Esophagus squamous epithelium (tissue), 5 donors: ENCODE measurements at regions of chr9 and their contacts with region 1.

Region 1: DNA sequence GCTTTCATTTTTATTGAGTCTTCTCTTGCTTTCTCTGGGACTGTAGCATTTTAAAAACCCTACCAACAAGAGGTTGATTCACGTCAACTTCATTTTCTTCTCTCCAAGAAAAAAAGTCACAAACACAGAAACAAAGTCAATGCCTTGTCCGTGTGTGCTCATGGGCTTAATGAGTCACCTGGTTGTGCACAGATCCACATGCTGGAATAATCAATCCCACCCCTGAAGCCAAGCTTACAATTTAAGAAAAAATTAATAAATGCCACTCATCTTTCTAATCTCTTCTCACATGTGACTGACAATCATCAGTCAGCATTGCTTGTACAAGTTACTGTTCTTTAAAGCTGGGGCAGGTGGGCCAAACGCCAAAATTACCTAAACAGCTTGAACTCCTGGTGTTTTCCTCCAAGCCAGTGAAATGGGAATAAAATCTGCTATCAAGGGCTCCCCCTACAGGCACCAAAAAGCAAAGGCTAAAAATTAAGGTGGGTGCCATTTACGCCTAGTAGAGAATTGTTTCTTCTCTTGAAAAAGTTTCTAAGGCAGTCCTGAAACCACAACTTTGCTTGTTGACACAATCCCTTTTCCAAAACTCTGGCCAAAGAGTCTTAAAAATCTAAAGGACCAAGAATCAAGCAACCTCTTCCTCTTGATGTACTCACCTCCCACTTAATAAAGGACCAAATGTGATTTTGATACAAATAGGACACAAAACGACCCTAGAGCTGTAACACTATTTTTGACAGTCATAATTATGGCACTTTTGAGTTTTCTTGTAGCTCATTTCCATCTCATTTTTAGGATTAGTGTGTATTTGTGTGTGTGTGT is 21.3 kb downstream of the TRMO start:
- DNase-seq: no peak
- H3K4me3 ChIP-seq: no peak overlapping the region
- H3K27ac ChIP-seq: peak overlapping the region in 1 of 4 donors; percentile 22
- H3K4me1 ChIP-seq: peaks cover 0 to 23% (median 3%) of the 10 kb centered on the region in 3 donors
- H3K27me3 ChIP-seq: no peaks in the 10 kb centered on the region
- CTCF ChIP-seq: peak; percentile 54 to 83 (median 72)
- POLR2A ChIP-seq: no peak

Region 2: DNA sequence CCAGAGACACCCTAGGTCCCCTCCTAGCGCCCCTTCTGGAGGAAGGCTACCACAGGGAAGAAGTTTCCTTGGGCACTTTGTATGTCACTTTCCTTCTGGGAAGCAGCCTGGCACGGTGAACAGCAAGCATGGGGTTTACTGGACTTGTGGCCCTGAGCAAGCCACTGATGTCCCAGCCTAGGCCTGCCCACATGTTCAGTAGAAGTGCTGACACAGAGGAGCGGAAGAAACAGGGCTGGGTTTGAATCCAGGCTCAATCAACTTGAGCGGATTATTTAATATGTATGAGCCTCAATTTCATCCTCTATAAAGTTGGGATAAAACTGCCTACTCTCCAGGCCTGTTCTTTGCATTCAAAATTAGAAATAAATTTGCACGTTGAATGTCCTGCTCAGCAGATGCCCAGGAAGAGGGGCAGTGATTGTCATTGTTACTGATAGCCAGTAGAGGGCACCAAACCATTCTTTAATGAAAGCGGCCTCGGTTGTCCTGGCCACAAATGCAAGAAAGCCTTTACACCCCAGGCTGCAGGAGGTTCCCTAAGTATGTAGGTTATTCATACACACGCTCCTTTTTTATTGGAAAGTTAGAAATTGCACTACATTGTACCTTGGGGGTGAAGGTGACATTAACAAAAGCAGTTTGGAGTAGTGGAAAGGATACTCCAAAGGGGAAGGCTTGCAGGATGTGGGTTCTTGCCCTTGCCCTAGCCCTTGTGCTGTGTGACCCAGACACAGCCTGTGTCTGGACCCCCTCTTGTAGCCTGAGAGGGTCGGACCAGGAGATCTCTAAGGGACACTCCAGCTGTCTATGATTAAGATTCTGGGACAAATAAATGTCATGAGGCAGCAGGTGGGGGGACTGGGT is 190.4 kb before region 1 on chr9:
- intact Hi-C with region 1: loop called (anchors 5 kb)
- DNase-seq: no peak
- H3K4me3 ChIP-seq: no peak overlapping the region
- H3K27ac ChIP-seq: no peak overlapping the region
- H3K4me1 ChIP-seq: peaks cover 0 to 24% (median 0%) of the 10 kb centered on the region in 3 donors
- H3K27me3 ChIP-seq: peaks cover 0 to 27% (median 0%) of the 10 kb centered on the region in 4 donors
- CTCF ChIP-seq: peak; percentile 71 to 90 (median 86)
- POLR2A ChIP-seq: no peak

Region 3: DNA sequence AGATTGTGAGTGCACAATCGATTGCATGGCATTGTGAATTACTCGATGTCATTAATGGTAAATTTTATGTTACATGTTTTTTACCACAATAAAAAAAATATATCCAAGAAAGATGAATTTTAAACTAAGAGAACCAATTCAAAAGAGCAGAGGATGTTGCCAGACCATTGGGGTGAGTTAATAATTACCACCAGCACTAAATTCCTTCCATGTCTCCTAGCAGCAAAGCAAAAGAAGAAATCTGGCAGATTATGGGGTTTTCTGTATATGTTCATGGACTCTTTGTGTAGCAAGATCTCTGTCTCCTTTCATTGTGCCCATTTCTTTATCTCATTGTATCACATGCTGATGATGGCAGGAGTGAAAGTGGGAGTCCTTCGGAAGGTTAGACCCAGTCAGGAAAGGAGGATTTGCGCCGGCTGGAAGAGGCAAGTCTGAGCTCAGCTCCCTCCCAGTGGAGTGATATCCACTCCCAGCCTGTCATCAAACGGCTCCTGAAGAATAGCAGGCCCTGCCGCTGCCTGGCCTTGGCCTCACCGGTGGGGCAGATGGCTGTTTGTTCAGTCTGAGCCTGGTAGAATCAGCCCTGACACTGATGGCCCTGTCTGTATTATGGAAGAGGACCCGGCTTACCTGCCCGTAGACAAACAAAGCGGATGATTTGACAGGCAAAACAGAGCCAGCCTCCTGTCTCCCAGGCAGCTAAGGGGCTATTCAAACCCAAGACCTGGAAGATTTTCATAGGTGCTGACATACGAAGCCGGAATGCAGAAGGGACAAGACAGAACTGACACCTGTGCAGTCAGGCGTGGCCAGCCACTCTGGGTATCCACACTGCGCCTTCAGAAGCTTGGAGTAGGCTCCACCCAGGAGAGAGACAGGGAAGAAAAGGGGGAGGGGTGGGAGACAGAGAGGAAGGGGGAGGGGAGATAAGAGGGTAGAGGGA is 69.8 kb before region 1 on chr9:
- intact Hi-C with region 1: no loop called
- DNase-seq: no peak
- H3K4me3 ChIP-seq: no peak overlapping the region
- H3K27ac ChIP-seq: no peak overlapping the region
- H3K4me1 ChIP-seq: peaks cover 0 to 11% (median 7%) of the 10 kb centered on the region in 3 donors
- H3K27me3 ChIP-seq: peaks cover 0 to 13% (median 0%) of the 10 kb centered on the region in 4 donors
- CTCF ChIP-seq: no peak
- POLR2A ChIP-seq: no peak

Region 4: GRCh38 chr9:97990266-97990665 is 89.3 kb after region 1 on chr9:
- intact Hi-C with region 1: no loop called
- DNase-seq: no peak
- H3K4me3 ChIP-seq: no peak overlapping the region
- H3K27ac ChIP-seq: no peak overlapping the region
- H3K4me1 ChIP-seq: peaks cover 20 to 87% (median 54%) of the 10 kb centered on the region in 3 donors
- H3K27me3 ChIP-seq: no peaks in the 10 kb centered on the region
- CTCF ChIP-seq: no peak
- POLR2A ChIP-seq: no peak